ENCODE measurements at regions of chr3 and their contacts with region 1.

Region 1: DNA sequence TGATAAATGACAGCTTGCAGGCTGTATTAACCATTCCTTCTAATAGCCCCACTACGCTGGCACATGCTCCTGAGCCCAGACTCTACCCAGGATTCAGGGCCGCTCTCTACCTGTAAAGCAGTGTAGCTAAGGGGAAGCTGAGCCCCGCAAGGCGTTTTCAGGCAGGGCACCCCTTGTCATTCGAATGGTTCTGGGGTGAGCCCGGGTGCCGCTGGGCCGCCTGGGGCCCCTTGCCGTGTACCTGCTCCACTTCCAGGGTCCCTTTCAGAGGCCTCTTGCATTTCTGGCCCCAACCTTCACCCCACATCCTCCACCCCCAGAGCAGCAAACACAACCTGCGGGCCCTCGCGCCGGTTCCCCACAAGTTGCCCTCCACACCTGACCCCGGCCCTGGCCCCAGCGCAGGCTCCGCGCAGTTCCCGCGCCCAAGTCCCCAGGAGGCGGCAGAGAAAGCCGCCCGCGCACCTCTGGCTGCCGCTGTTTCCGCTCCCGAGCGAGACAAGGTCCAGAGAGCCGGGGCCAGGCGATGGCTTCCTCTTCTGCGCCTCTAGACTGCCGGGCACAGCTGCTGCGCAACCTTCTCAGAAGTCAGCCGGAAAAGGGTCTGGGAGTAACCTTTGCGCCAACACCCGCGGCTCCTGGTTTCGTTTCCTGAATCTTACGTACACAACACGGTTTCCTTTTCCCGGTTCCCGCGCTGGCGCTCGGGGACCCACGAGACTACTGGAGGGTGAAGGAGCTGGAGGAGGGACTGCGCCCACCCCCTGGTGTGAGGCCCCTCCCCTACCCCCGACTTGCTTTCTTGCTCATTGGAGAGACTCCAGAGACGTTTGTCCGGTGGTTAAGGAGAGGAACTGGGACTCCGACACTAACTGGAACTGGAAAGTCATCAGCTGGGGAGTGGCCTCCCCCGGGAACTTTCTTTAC is at the start of gene PLSCR1:
- DNase-seq: peak in 1 of 2 donors; percentile 99
- H3K4me3 ChIP-seq: peak within 1 kb of the TSS; percentile 68 to 95
- H3K27ac ChIP-seq: peak within 1 kb of the TSS; percentile 97
- H3K4me1 ChIP-seq: peaks cover 17% of the 10 kb centered on the region
- H3K27me3 ChIP-seq: no peaks in the 10 kb centered on the region
- CTCF ChIP-seq: peak in 1 of 3 experiments; percentile 21
- POLR2A ChIP-seq: peak in 1 of 2 donors; percentile 86
- total RNA-seq, gene PLSCR1: 78.1 TPM

Region 2: DNA sequence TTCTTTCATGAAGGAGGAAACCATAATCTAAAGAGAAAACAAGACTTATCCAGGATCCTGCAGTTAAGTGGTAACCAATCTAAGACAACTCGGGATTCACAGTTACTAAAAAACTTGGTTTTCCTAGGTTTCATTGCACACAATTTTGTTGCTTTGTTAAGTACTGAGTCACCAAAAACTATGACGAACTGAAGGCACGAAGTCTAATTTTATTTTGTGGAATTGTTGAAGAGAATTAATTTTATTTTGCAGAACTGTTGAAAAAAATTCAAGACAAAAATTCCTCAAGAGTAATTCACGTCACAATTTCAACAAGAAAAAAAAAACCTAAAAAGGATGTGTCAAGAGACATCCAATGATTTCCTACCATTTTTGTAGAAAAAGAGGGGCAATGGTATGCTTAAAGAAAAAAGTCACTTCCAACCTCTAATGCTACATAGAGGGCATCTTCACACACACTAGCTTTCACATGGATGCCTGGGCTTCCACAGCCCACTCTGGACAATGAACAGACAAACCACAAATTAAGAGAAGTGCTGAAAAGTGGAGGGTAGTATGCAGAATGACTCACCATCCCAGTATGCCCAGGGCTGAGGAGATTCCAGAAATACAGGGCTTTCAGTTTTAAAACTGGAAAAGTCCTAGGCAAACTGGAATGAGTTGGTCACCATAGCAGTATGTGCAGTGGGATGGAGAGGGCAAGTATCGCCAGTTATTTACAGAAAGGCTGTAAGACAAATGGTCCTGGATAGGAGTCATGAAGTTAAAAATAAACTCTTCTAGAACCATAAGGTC is 412.5 kb before region 1 on chr3:
- intact Hi-C with region 1: loop called (anchors 10 kb)
- DNase-seq: no peak
- H3K4me3 ChIP-seq: no peak overlapping the region
- H3K27ac ChIP-seq: no peak overlapping the region
- H3K4me1 ChIP-seq: peaks cover 27% of the 10 kb centered on the region
- H3K27me3 ChIP-seq: no peaks in the 10 kb centered on the region
- CTCF ChIP-seq: no peak
- POLR2A ChIP-seq: no peak

Region 3: DNA sequence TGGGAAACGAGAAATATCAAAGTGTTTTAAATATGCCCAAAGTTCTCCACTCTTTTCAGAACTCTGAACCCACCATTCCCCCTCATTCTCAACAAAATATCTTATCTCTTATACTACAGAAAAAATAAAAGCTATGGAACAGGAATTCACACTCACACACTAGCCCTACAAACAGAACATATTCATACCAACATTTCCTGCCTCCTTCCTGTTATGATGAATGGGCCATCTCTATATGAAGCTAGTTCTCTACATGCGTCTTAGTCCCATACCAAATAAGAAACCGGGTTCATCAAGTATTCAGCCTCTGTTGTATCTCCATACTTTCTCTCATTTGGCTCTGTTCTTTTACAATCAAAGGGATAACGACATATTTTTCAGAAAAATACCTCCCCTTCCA is 147.5 kb before region 1 on chr3:
- intact Hi-C with region 1: no loop called
- DNase-seq: no peak
- H3K4me3 ChIP-seq: no peak overlapping the region
- H3K27ac ChIP-seq: no peak overlapping the region
- H3K4me1 ChIP-seq: no peaks in the 10 kb centered on the region
- H3K27me3 ChIP-seq: no peaks in the 10 kb centered on the region
- CTCF ChIP-seq: no peak
- POLR2A ChIP-seq: no peak

Region 4: DNA sequence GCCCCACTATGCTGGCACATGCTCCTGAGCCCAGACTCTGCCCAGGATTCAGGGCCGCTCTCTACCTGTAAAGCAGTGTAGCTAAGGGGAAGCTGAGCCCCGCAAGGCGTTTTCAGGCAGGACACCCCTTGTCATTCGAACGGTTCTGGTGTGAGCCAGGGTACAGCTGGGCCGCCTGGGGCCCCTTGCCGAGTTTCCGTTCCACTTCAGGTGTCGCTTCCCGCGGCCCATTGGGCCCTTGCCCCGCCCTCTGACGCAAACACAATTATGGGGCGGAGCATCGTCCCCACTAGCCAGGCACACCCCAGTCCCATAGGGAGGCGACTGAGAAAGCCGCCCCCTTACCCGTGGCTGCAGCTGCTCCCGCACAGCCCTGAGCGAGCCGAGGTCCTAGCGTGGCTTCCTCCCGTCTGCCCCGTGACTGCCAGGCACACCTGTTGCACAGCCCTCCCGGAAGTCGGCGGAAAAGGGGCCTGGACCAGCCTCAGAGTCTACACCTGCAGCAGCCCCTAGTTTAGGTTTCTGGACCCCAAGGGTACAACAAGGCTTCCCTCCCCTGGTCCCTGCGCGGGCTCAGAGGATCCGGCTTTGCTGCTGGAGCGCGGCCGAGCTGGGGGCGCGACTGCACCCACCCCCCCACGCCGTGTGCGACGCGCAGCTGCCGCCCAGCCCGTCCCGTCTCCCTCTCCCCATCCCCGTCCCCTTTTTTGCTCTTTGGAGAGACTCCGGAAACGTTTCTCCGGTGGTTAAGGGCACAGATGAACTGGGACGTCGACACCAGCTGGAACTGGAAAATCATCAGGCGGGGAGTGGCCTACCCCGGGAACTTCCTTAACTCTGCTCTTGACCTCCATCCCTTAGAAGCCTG is 74.9 kb before region 1 on chr3 and contains the start of gene PLSCR2:
- intact Hi-C with region 1: loop called (anchors 10 kb)
- DNase-seq: no peak
- H3K4me3 ChIP-seq: peak within 1 kb of the TSS; percentile 52 to 64
- H3K27ac ChIP-seq: peak within 1 kb of the TSS; percentile 76
- H3K4me1 ChIP-seq: peaks cover 23% of the 10 kb centered on the region
- H3K27me3 ChIP-seq: no peaks in the 10 kb centered on the region
- CTCF ChIP-seq: no peak
- POLR2A ChIP-seq: peak in 1 of 2 donors; percentile 18
- total RNA-seq, gene PLSCR2: not detected